HAP-1 (cell line): ENCODE measurements at regions of chr2 and their contacts with region 1.

Region 1: GRCh38 chr2:109128048-109128465 is 948 bp upstream of the SH3RF3 start:
- DNase-seq: peak; percentile 68 to 87
- H3K4me3 ChIP-seq: peak overlapping the region; percentile 35
- H3K4me1 ChIP-seq: no peaks in the 10 kb centered on the region
- H3K27me3 ChIP-seq: peaks cover 28% of the 10 kb centered on the region

Region 2: GRCh38 chr2:109069331-109070194 is 58.5 kb before region 1 on chr2:
- in situ Hi-C with region 1: no loop called
- DNase-seq: no peak
- H3K4me3 ChIP-seq: no peak overlapping the region
- H3K4me1 ChIP-seq: no peaks in the 10 kb centered on the region
- H3K27me3 ChIP-seq: no peaks in the 10 kb centered on the region

Region 3: DNA sequence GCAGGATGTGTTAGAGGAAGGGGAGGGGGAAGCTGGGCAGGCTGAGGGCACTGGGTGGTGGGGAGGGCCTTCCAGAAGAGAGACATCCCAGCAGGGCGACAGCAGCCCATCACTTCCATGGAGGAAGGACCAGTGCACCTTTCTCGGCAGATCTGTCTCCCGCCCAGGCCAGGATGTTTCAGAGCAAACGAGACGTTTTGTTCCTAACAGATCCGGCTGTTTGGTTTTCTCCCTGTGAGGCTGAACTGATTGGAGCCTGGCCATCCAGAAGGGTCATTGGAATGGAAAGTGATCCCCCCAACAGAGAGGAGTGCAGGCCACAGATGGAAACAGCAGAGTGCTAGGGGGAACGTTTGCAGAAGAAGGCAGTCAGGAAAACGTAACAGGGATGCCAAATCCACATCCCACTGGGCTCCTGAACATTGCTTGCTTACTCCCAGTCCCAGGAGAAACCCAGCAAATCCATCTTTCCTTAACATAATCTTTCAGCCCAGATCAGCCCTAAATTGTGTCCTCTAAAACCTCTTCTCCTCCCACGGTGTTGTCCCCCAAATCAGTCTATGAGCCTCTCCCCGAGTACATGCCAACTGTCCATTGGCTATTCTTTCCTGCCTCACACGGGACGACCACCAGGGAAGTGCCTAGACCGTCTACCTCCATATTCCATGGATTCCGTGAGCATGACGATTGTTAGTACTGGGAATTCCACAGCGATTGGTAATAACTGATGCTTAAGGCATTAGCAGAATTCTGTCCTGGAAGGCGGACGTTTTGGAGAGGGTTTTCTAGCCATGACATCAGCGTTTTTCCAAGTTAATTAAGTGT is 358.9 kb after region 1 on chr2:
- in situ Hi-C with region 1: no loop called
- DNase-seq: no peak
- H3K4me3 ChIP-seq: no peak overlapping the region
- H3K4me1 ChIP-seq: no peaks in the 10 kb centered on the region
- H3K27me3 ChIP-seq: 0 out of 2 replicates have a peak, but pooled peaks cover 5% of the 10 kb centered on the region

Region 4: DNA sequence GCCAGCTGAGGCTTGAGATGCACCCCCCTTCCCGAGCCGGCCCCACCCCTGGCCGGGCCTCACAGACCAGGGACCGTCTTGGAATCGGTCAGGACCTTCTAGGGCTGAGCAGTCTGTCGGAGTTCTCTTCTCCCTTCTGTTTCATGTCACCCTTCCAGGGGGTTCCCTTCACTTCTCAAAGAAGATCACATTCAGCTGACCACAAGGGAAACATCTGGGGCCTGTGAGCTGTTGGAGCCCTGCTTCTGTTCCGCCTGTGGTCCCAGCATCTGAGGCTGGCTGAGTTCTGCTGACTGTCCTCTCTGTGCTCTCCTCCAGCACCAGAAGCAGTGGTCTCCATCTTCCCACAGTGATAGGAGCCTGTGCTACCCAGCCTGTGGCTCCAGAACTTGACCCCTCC is 379.2 kb after region 1 on chr2:
- in situ Hi-C with region 1: loop called (anchors 5 kb)
- DNase-seq: no peak
- H3K4me3 ChIP-seq: no peak overlapping the region
- H3K4me1 ChIP-seq: no peaks in the 10 kb centered on the region
- H3K27me3 ChIP-seq: 0 out of 2 replicates have a peak, but pooled peaks cover 5% of the 10 kb centered on the region